ENCODE measurements at regions of chr19 and their contacts with region 1.

Region 1: GRCh38 chr19:5690125-5690954 is at the start of gene RPL36:
- DNase-seq: peak; percentile 97
- H3K4me3 Mint-ChIP-seq: peak within 1 kb of the TSS; percentile 92
- H3K27ac Mint-ChIP-seq: peak within 1 kb of the TSS; percentile 97
- H3K4me1 Mint-ChIP-seq: no peaks in the 10 kb centered on the region
- H3K27me3 Mint-ChIP-seq: no peaks in the 10 kb centered on the region
- CTCF ChIP-seq: peak; percentile 90
- total RNA-seq, gene RPL36: 1,569 and 1,807 TPM in 2 replicates

Region 2: DNA sequence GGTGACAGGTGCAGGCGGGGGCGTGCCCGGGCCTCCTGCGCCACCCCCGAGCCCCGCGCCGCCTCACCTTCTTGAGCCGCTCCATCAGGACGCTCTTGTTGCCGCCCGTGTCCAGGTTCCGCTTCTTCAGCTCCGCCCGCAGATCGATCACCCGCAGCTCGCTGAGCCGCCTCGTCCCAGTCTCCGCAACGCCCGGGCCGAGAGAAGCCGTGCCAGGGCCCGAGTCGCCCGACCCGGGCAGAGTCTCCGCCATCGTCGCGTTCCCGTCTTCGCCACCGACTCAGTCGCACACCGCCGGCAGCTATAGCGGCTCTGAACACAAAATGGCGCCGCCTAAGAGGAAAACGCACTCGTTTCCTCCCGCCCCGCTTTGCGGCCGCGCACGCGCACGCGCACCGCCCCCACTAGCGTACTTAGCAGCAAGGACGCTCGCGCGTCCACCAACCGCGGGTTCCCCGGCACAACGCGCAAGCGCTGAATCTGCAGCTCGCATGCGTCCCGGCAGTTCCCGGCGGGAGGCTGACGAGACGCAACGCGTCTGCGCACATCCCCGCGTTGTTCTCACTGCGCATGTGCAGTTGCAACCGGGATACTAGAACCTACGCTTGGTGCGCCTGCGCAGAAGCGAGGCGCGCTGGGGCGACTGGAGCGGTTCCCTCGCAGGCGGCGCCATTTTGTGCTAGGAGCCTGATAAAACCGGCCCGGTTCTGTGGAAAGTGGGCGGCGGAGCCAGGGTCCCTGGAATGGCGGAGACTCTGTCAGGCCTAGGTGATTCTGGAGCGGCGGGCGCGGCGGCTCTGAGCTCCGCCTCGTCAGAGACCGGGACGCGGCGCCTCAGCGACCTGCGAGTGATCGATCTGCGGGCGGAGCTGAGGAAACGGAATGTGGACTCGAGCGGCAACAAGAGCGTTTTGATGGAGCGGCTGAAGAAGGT is 67.6 kb before region 1 on chr19 and contains the starts of genes SAFB and SAFB2:
- CTCF ChIA-PET with region 1: interaction called, 4 read pairs
- POLR2A ChIA-PET with region 1: interaction called, 17 read pairs
- intact Hi-C with region 1: no loop called
- DNase-seq: peak; percentile 100
- H3K4me3 Mint-ChIP-seq: peak within 1 kb of the TSS; percentile 100
- H3K27ac Mint-ChIP-seq: peak within 1 kb of the TSS; percentile 100
- H3K4me1 Mint-ChIP-seq: peaks cover 41% of the 10 kb centered on the region
- H3K27me3 Mint-ChIP-seq: no peaks in the 10 kb centered on the region
- CTCF ChIP-seq: no peak
- total RNA-seq, gene SAFB: 135 and 137 TPM in 2 replicates
- total RNA-seq, gene SAFB2: 98.6 and 118 TPM in 2 replicates

Region 3: GRCh38 chr19:5790573-5791520 is 100.5 kb after region 1 on chr19 and contains the start of gene DUS3L:
- CTCF ChIA-PET with region 1: interaction called, 4 read pairs
- POLR2A ChIA-PET with region 1: interaction called, 6 read pairs
- intact Hi-C with region 1: loop called (anchors 10 kb)
- DNase-seq: peak; percentile 98
- H3K4me3 Mint-ChIP-seq: peak within 1 kb of the TSS; percentile 98
- H3K27ac Mint-ChIP-seq: peak within 1 kb of the TSS; percentile 100
- H3K4me1 Mint-ChIP-seq: peaks cover 14% of the 10 kb centered on the region
- H3K27me3 Mint-ChIP-seq: no peaks in the 10 kb centered on the region
- CTCF ChIP-seq: no peak
- total RNA-seq, gene DUS3L: 53.5 and 77.6 TPM in 2 replicates

Measured in MCF 10A (cell line).